IMR-90 (cell line): ENCODE measurements at regions of chr11 and their contacts with region 1.

Region 1: GRCh38 chr11:33617665-33618350 is 82.8 kb downstream of the C11orf91 start:
- DNase-seq: no peak
- ATAC-seq: no peak
- H3K4me3 ChIP-seq: no peak overlapping the region
- H3K27ac ChIP-seq: no peak overlapping the region
- H3K4me1 ChIP-seq: peaks cover 6% of the 10 kb centered on the region
- H3K27me3 ChIP-seq: no peaks in the 10 kb centered on the region
- CTCF ChIP-seq: no peak
- POLR2A ChIP-seq: no peak
- RAD21 ChIP-seq: no peak

Region 2: GRCh38 chr11:32105871-32106560 is 1511.8 kb before region 1 on chr11:
- CTCF ChIA-PET with region 1: no interaction called
- POLR2A ChIA-PET with region 1: no interaction called
- dilution Hi-C with region 1: no loop called
- in situ Hi-C with region 1: no loop called
- intact Hi-C with region 1: no loop called
- DNase-seq: no peak
- ATAC-seq: no peak
- H3K4me3 ChIP-seq: no peak overlapping the region
- H3K27ac ChIP-seq: no peak overlapping the region
- H3K4me1 ChIP-seq: peaks cover 3% of the 10 kb centered on the region
- H3K27me3 ChIP-seq: no peaks in the 10 kb centered on the region
- CTCF ChIP-seq: no peak
- POLR2A ChIP-seq: no peak
- RAD21 ChIP-seq: no peak

Region 3: DNA sequence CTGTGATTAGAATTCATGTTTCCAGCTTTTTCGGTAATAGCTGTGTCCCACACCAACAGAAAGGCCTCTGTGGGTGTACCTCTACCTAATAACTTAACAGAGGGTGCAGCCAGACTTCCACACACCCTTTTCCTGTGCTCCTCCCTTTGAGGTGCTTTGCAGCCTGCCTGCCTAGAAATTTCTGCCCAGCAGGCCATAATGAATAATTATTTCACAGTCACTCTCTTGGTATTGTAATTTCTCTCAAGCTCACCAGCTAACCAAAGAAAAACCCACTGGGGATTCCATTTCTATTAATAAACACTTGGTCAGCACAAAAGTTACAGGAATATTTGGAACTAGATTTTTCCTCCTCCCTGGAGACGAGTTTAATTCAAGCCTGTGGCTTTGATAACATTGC is 1195.8 kb before region 1 on chr11:
- CTCF ChIA-PET with region 1: interaction called, 10 read pairs
- POLR2A ChIA-PET with region 1: no interaction called
- dilution Hi-C with region 1: no loop called
- in situ Hi-C with region 1: no loop called
- intact Hi-C with region 1: no loop called
- DNase-seq: no peak
- ATAC-seq: no peak
- H3K4me3 ChIP-seq: no peak overlapping the region
- H3K27ac ChIP-seq: no peak overlapping the region
- H3K4me1 ChIP-seq: no peaks in the 10 kb centered on the region
- H3K27me3 ChIP-seq: peaks cover 27% of the 10 kb centered on the region
- CTCF ChIP-seq: no peak
- POLR2A ChIP-seq: no peak
- RAD21 ChIP-seq: no peak